H1 (cell line): ENCODE measurements at regions of chr16 and their contacts with region 1.

Region 1: GRCh38 chr16:11851294-11852091 is at the start of gene RSL1D1:
- DNase-seq: peak; percentile 61 to 95
- H3K4me3 ChIP-seq: peak within 1 kb of the TSS; percentile 89 to 100 (median 98)
- H3K27ac ChIP-seq: peak within 1 kb of the TSS; percentile 94
- H3K4me1 ChIP-seq: peaks cover 0 to 4% (median 0%) of the 10 kb centered on the region in 4 experiments; a peak in 2 of 7 replicates
- H3K27me3 ChIP-seq: no peaks in the 10 kb centered on the region
- CTCF ChIP-seq: no peak
- EP300 ChIP-seq: no peak
- POLR2A ChIP-seq: peak; percentile 93 to 98
- RAD21 ChIP-seq: no peak
- total RNA-seq, gene RSL1D1: 274 and 292 TPM in 2 replicates

Region 2: GRCh38 chr16:11742539-11743307 is 108.8 kb before region 1 on chr16 and contains the start of gene TXNDC11:
- CTCF ChIA-PET with region 1: no interaction called
- POLR2A ChIA-PET with region 1: interaction called, 11 read pairs
- DNase-seq: peak; percentile 88 to 99
- H3K4me3 ChIP-seq: peak within 1 kb of the TSS; percentile 74 to 85 (median 80)
- H3K27ac ChIP-seq: peak within 1 kb of the TSS; percentile 73; the same call in 1 of the 2 replicates
- H3K4me1 ChIP-seq: peaks cover 2 to 6% (median 3%) of the 10 kb centered on the region in 4 experiments; a peak in 2 of 7 replicates
- H3K27me3 ChIP-seq: no peaks in the 10 kb centered on the region
- CTCF ChIP-seq: no peak
- EP300 ChIP-seq: no peak; a peak in 1 of 3 replicates
- POLR2A ChIP-seq: peak; percentile 92 to 93
- RAD21 ChIP-seq: no peak
- total RNA-seq, gene TXNDC11: 12.6 and 13.8 TPM in 2 replicates

Region 3: DNA sequence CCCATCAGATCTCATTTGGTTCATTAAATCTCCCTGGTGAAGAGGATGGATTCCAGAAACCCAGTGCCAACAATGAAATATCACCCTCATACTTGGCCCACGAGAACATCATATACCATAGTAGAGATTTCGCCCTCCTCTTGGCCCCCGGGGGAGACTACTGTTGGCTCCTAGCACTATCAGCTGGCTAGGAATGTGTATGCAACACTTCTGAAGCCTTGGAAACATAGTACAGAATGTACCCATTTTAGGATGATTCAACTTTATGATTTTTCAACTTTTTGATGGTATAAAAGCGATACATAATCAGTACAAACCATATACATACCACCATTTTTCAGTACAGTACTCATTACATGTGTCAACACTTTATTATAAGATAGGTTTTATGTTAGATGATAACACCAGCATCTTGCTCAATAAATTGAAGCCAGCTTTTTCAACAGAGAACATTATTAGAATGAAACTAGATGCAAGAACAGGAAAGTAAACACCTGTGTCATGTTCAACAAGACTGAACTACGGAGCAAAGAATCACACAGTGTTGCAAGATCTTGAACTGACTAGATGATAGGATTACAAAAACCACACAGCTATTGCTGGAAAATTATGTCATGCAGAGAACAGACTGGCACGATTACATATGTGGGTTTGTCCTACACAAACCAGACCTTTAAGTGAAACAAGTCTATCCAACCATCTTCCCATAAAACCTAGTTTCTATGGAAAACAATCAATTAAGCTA is 17.4 kb before region 1 on chr16:
- CTCF ChIA-PET with region 1: no interaction called
- POLR2A ChIA-PET with region 1: interaction called, 59 read pairs
- DNase-seq: no peak
- H3K4me3 ChIP-seq: no peak overlapping the region
- H3K27ac ChIP-seq: no peak overlapping the region
- H3K4me1 ChIP-seq: peaks cover 0 to 5% (median 0%) of the 10 kb centered on the region in 4 experiments; a peak in 1 of 7 replicates
- H3K27me3 ChIP-seq: no peaks in the 10 kb centered on the region
- CTCF ChIP-seq: no peak
- EP300 ChIP-seq: no peak
- POLR2A ChIP-seq: no peak
- RAD21 ChIP-seq: no peak

Region 4: DNA sequence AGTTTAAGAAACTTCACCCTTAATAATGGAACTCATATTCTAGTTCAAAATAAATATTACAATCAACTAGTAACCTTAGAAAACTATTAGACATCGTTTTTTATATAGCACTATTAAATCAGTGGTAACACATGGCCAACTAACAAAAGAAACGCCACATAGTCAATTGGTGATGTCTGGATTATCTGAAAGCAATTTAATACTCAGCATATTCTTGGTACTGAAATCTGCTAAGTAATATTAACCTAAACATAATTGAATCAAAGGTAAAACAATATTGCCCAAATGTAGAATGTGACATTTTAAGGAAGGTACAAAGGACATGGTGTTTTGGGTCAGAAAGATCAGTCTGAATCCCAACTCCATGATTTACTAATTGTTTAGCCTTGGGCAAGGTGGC is 11.0 kb after region 1 on chr16:
- CTCF ChIA-PET with region 1: interaction called, 4 read pairs
- POLR2A ChIA-PET with region 1: interaction called, 13 read pairs
- DNase-seq: no peak
- H3K4me3 ChIP-seq: no peak overlapping the region
- H3K27ac ChIP-seq: no peak overlapping the region
- H3K4me1 ChIP-seq: no peaks in the 10 kb centered on the region
- H3K27me3 ChIP-seq: no peaks in the 10 kb centered on the region
- CTCF ChIP-seq: no peak
- EP300 ChIP-seq: no peak
- POLR2A ChIP-seq: no peak
- RAD21 ChIP-seq: no peak